Naive thymus-derived CD4-positive, alpha-beta T cell (primary cell): ENCODE measurements at regions of chr15 and their contacts with region 1.

Region 1: GRCh38 chr15:90931737-90932659 is at the start of gene HDDC3:
- DNase-seq: peak; percentile 80 to 98 (median 88)
- ATAC-seq: peak; percentile 72
- H3K4me3 ChIP-seq: peak within 1 kb of the TSS; percentile 97
- H3K4me3 Mint-ChIP-seq: peak within 1 kb of the TSS; percentile 96 to 100 (median 98)
- H3K27ac ChIP-seq: peak within 1 kb of the TSS; percentile 79
- H3K27ac Mint-ChIP-seq: peak within 1 kb of the TSS; percentile 91 to 99 (median 98)
- H3K4me1 ChIP-seq: peaks cover 33 to 50% of the 10 kb centered on the region in 2 donors
- H3K4me1 Mint-ChIP-seq: peaks cover 36 to 63% (median 53%) of the 10 kb centered on the region in 7 donors
- H3K27me3 ChIP-seq: no peaks in the 10 kb centered on the region
- H3K27me3 Mint-ChIP-seq: no peaks in the 10 kb centered on the region
- total RNA-seq, gene HDDC3: 13.3 to 34.2 (median 29.0) TPM

Region 2: GRCh38 chr15:89334510-89335288 is 1597.3 kb before region 1 on chr15 and contains the start of gene POLG:
- CTCF ChIA-PET with region 1: no interaction called
- POLR2A ChIA-PET with region 1: no interaction called
- intact Hi-C with region 1: loop called in 1 of 2 experiments (anchors 10 kb)
- DNase-seq: peak; percentile 92 to 100 (median 99)
- ATAC-seq: peak; percentile 95
- H3K4me3 ChIP-seq: peak within 1 kb of the TSS; percentile 91
- H3K4me3 Mint-ChIP-seq: peak within 1 kb of the TSS; percentile 88 to 98 (median 95)
- H3K27ac ChIP-seq: peak within 1 kb of the TSS; percentile 82
- H3K27ac Mint-ChIP-seq: peak within 1 kb of the TSS; percentile 93 to 100 (median 100)
- H3K4me1 ChIP-seq: peaks cover 44 to 48% of the 10 kb centered on the region in 2 donors
- H3K4me1 Mint-ChIP-seq: peaks cover 28 to 55% (median 51%) of the 10 kb centered on the region in 7 donors
- H3K27me3 ChIP-seq: no peaks in the 10 kb centered on the region
- H3K27me3 Mint-ChIP-seq: peaks cover 0 to 9% (median 4%) of the 10 kb centered on the region in 5 donors
- total RNA-seq, gene POLG: 121 to 136 (median 129) TPM

Region 3: GRCh38 chr15:90320061-90320884 is 611.7 kb before region 1 on chr15:
- CTCF ChIA-PET with region 1: interaction called, 7 read pairs
- POLR2A ChIA-PET with region 1: no interaction called
- intact Hi-C with region 1: loop called in 1 of 2 experiments (anchors 1 kb)
- DNase-seq: peak; percentile 39 to 74 (median 65)
- ATAC-seq: peak; percentile 100
- H3K4me3 ChIP-seq: no peak overlapping the region
- H3K4me3 Mint-ChIP-seq: peak overlapping the region in 6 of 10 donors; percentile 8 to 52 (median 38)
- H3K27ac ChIP-seq: no peak overlapping the region
- H3K27ac Mint-ChIP-seq: peak overlapping the region in 2 of 9 donors; percentile 26 to 28
- H3K4me1 ChIP-seq: peaks cover 0 to 5% of the 10 kb centered on the region in 2 donors
- H3K4me1 Mint-ChIP-seq: peaks cover 3 to 10% (median 8%) of the 10 kb centered on the region in 7 donors
- H3K27me3 ChIP-seq: no peaks in the 10 kb centered on the region
- H3K27me3 Mint-ChIP-seq: peaks cover 0 to 2% (median 0%) of the 10 kb centered on the region in 5 donors

Region 4: GRCh38 chr15:90839187-90840071 is 92.6 kb before region 1 on chr15:
- CTCF ChIA-PET with region 1: interaction called, 4 read pairs
- POLR2A ChIA-PET with region 1: interaction called, 3 read pairs
- intact Hi-C with region 1: loop called in 1 of 2 experiments (anchors 10 kb)
- DNase-seq: peak in 1 of 9 donors; percentile 28
- ATAC-seq: no peak
- H3K4me3 ChIP-seq: peak overlapping the region; percentile 2
- H3K4me3 Mint-ChIP-seq: peak overlapping the region; percentile 32 to 78 (median 58)
- H3K27ac ChIP-seq: peak overlapping the region; percentile 35
- H3K27ac Mint-ChIP-seq: peak overlapping the region in 8 of 9 donors; percentile 53 to 91 (median 79)
- H3K4me1 ChIP-seq: peaks cover 18 to 27% of the 10 kb centered on the region in 2 donors
- H3K4me1 Mint-ChIP-seq: peaks cover 21 to 86% (median 30%) of the 10 kb centered on the region in 7 donors
- H3K27me3 ChIP-seq: no peaks in the 10 kb centered on the region
- H3K27me3 Mint-ChIP-seq: no peaks in the 10 kb centered on the region

Region 5: GRCh38 chr15:90942354-90943120 is 10.5 kb after region 1 on chr15:
- CTCF ChIA-PET with region 1: interaction called, 10 read pairs
- POLR2A ChIA-PET with region 1: interaction called, 4 read pairs
- intact Hi-C with region 1: no loop called
- DNase-seq: no peak
- ATAC-seq: no peak
- H3K4me3 ChIP-seq: no peak overlapping the region
- H3K4me3 Mint-ChIP-seq: no peak overlapping the region
- H3K27ac ChIP-seq: no peak overlapping the region
- H3K27ac Mint-ChIP-seq: peak overlapping the region in 1 of 9 donors; percentile 30
- H3K4me1 ChIP-seq: no peaks in the 10 kb centered on the region
- H3K4me1 Mint-ChIP-seq: no peaks in the 10 kb centered on the region
- H3K27me3 ChIP-seq: no peaks in the 10 kb centered on the region
- H3K27me3 Mint-ChIP-seq: no peaks in the 10 kb centered on the region

Region 6: DNA sequence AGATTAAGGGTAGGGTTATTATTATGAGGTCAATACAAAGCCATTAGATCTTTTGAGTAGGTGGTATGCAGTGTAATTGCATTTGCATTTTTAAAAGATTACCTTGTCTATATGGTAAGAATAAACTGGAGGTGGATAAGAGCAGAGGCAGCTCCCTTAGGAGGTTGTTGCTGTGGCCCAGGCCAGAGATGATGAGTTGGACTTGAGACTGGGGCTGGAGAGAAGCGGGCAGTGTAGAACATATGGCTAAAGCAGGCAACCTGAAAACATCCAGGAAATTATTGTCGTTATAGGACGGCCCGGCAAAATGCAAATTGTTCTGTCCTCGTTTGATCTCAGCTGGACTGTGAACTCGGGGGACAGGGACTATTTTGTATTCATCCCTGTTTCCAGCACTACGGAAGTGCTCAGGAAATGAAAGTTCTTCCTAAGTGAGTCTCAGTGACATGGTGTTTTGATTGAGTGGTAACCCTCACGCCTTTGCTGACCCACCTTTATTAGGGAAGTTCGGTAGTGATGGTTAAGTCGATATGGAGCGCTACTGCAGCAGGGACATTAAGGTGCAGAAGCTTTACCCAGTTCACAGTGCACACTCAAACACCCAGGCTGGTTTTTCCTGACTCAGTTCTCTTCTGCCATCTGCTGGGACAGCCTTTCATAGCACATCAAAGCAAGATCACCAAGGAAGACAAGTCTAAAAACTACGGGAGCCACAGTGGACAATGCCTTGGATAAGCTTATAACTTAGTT is 117.6 kb after region 1 on chr15:
- CTCF ChIA-PET with region 1: interaction called, 10 read pairs
- POLR2A ChIA-PET with region 1: no interaction called
- intact Hi-C with region 1: loop called in 1 of 2 experiments (anchors 1 kb)
- DNase-seq: peak; percentile 19 to 62 (median 54)
- ATAC-seq: peak; percentile 92
- H3K4me3 ChIP-seq: no peak overlapping the region
- H3K4me3 Mint-ChIP-seq: peak overlapping the region in 3 of 10 donors; percentile 12 to 48 (median 17)
- H3K27ac ChIP-seq: no peak overlapping the region
- H3K27ac Mint-ChIP-seq: peak overlapping the region in 4 of 9 donors; percentile 17 to 70 (median 20)
- H3K4me1 ChIP-seq: peaks cover 3 to 6% of the 10 kb centered on the region in 2 donors
- H3K4me1 Mint-ChIP-seq: peaks cover 6 to 40% (median 31%) of the 10 kb centered on the region in 7 donors
- H3K27me3 ChIP-seq: no peaks in the 10 kb centered on the region
- H3K27me3 Mint-ChIP-seq: peaks cover 10 to 41% (median 19%) of the 10 kb centered on the region in 5 donors